Thyroid gland (tissue), 4 donors: ENCODE measurements at regions of chr2 and their contacts with region 1.

Region 1: DNA sequence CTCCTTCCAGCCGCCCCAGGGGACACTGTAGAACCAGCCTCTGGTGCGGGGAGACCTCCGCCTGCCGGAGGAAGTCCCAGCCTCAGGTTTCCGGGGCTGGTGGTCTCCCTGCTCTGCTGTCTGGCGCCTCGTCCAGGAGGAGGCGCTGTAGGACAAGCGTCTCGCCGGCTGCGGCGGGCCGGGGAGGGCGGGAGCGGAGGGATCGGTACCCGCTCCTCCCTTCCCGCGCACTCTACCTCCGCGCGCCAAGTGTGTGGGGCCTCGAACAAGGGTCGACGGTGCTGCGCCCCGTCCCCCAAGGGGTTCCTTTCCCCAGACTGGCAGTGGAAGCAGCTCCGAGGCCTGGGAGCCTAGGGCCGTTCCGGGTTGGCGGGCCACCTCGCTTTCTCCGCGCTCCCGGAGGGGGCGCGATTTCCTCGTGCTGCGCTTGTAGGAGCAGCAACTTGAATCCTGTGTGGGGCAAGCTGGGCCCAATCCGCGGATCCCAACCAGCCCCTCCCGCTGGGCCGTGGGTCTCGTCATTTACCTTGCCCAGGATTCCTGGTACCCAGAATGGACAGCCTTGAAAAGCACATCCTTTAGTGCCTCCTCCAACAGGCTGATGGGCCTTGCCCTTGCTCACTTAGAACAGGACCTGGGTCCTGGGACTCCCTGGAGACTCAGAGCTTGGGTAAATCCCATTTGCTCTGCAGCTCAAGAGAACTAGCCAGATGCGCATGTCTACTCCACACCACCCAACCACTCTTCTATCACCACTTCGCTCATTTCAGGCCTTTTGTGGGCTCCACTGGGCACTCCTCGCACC is 10.6 kb upstream of the HOXD4 start:
- DNase-seq: peak; percentile 51 to 67
- H3K4me3 ChIP-seq: peak overlapping the region in 1 of 3 donors; percentile 34
- H3K27ac ChIP-seq: no peak overlapping the region
- H3K4me1 ChIP-seq: peaks cover 0 to 21% of the 10 kb centered on the region in 2 donors
- H3K27me3 ChIP-seq: peaks cover 51% of the 10 kb centered on the region
- CTCF ChIP-seq: peak; percentile 56 to 87 (median 84)
- POLR2A ChIP-seq: no peak

Region 2: DNA sequence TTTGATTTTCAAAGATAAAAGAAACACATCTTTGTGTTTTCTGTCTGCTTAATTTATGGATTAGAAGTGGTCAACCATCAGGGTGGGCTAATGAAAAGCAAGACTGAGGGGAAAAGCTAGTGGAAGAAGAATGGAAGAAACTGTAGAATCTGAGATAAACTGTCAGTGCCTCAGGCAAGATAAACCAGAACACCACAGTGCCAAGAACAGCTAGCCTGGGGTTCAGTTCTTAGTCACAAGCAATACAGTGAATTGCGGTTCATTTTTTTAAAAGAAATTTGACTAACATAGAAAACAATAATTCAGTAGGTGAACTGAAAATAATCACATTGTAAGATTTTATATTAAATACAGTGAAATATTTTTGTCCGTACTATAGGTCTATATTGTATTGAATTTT is 116.6 kb before region 1 on chr2:
- intact Hi-C with region 1: no loop called
- DNase-seq: no peak
- H3K4me3 ChIP-seq: no peak overlapping the region
- H3K27ac ChIP-seq: no peak overlapping the region
- H3K4me1 ChIP-seq: no peaks in the 10 kb centered on the region
- H3K27me3 ChIP-seq: peaks cover 6% of the 10 kb centered on the region
- CTCF ChIP-seq: no peak
- POLR2A ChIP-seq: no peak

Region 3: GRCh38 chr2:176554101-176555048 is 413.7 kb after region 1 on chr2:
- intact Hi-C with region 1: loop called (anchors 5 kb)
- DNase-seq: peak; percentile 8 to 22
- H3K4me3 ChIP-seq: peak overlapping the region in 2 of 3 donors; percentile 2 to 23
- H3K27ac ChIP-seq: peak overlapping the region in 2 of 3 donors; percentile 26 to 57
- H3K4me1 ChIP-seq: peaks cover 0 to 5% of the 10 kb centered on the region in 2 donors
- H3K27me3 ChIP-seq: no peaks in the 10 kb centered on the region
- CTCF ChIP-seq: peak; percentile 56 to 90 (median 75)
- POLR2A ChIP-seq: no peak